Ovary (tissue), 10 donors: ENCODE measurements at regions of chr13 and their contacts with region 1.

Region 1: DNA sequence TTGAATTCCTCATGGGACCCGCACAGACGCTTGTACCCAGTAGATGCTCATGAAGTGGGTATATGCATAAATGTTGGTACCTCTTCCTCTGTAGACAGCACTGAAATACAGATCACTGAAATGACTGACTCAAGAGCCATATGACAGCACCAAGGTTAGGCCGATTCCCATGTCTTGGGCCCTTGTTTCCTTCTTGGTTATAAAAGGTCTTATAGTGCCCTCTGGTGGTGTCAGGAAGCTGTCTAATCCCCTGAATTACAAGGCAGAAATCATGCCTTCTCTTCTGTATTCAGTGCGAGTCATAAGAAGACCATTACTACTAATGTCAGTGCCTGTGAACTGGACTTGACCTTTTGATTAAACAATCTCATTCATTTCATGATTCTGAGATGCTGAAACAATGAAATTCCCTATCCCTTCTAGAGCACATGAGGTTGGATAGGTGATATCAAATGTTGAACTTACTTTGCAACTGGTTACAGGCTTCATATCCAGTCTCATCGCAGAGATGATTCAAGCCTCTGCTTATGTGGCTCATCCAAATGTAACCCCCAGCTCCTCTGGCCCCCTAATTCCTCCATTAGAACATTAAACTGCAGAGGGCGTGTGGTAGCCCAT is 59.7 kb downstream of the SPATA13 start:
- DNase-seq: peak in 1 of 5 donors; percentile 70
- H3K4me3 ChIP-seq: no peak overlapping the region
- H3K27ac ChIP-seq: peak overlapping the region in 1 of 2 donors; percentile 56
- H3K4me1 ChIP-seq: peaks cover 9% of the 10 kb centered on the region
- H3K27me3 ChIP-seq: no peaks in the 10 kb centered on the region
- CTCF ChIP-seq: peak; percentile 72 to 94 (median 89)
- EP300 ChIP-seq: no peak
- POLR2A ChIP-seq: no peak

Region 2: DNA sequence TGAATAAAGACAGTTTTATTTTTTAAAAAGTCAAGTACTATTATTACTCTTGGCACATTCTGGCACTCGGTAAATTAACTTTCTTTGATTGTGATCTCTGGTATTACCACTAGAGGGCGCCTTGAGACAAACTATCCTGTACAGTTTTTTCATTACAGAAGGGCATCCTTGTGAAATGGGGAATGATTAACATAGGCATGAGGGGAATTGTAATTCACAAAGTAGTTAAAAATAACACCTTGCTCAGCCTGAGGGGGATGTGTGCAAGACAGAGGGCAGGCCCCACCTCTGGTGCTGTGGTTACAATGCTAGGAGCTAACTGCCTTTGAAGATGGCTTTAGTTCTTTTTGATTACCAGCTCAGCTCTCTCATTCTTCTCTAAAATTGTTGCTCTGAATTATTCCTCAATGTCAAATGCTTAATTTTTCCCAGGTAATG is 298.7 kb before region 1 on chr13:
- intact Hi-C with region 1: loop called in 3 of 4 experiments (anchors 5 to 10 kb)
- DNase-seq: no peak
- H3K4me3 ChIP-seq: no peak overlapping the region
- H3K27ac ChIP-seq: no peak overlapping the region
- H3K4me1 ChIP-seq: no peaks in the 10 kb centered on the region
- H3K27me3 ChIP-seq: no peaks in the 10 kb centered on the region
- CTCF ChIP-seq: peak in 2 of 3 donors; percentile 16 to 21
- EP300 ChIP-seq: no peak
- POLR2A ChIP-seq: no peak

Region 3: DNA sequence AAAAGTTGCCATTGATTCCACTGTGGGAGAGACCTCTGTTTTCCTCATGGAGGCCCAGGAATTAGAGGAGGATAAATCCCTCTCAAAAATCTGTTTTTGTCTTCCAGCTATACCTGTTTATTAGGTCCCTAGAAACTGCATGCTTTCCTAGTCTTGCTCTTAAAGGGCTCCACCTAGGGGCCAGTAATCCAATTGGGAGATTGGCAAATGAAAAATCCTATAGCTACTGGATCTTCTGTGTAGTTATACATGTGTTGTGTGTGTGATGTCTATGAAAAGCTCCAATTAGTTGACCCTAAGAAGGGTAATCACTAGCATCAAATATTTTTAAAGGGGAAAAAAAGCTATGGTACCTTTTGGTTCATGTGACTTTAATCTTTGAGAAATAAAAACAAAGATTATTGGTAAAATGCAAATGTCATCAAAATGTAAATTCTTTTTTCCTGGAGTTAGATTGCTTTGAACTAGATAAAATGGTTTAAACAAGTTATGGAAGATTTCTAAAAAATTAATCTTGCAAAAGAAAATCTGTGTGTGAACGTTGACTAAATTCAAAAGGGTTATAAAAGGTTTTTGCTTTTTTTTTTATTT is 259.5 kb before region 1 on chr13:
- intact Hi-C with region 1: no loop called
- DNase-seq: no peak
- H3K4me3 ChIP-seq: no peak overlapping the region
- H3K27ac ChIP-seq: no peak overlapping the region
- H3K4me1 ChIP-seq: peaks cover 4% of the 10 kb centered on the region
- H3K27me3 ChIP-seq: no peaks in the 10 kb centered on the region
- CTCF ChIP-seq: peak; percentile 17 to 28 (median 26)
- EP300 ChIP-seq: no peak
- POLR2A ChIP-seq: no peak

Region 4: DNA sequence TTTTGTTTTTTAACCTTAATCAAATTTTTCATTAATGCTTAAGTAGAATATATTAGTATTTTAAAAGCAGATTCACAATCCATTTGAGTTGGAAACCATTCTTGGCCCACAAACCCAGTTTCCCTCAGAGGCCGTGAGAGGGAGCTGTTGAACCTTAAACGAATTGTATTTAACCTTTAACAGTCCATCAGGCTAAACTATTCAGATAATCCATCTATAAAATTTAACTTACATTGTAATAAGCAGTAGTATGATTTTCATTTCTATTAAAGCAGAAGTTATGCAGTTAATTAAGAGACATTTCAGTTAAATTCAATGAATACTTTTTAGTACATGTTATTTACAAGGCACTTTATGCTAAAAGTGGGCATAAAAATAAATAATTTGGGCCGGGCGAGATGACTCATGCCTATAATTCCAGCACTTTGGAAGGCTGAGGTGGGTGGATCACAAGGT is 199.8 kb before region 1 on chr13:
- intact Hi-C with region 1: loop called (anchors 5 kb)
- DNase-seq: peak; percentile 50 to 73 (median 65)
- H3K4me3 ChIP-seq: no peak overlapping the region
- H3K27ac ChIP-seq: no peak overlapping the region
- H3K4me1 ChIP-seq: no peaks in the 10 kb centered on the region
- H3K27me3 ChIP-seq: peaks cover 2% of the 10 kb centered on the region
- CTCF ChIP-seq: peak; percentile 27 to 92 (median 84)
- EP300 ChIP-seq: no peak
- POLR2A ChIP-seq: no peak

Region 5: DNA sequence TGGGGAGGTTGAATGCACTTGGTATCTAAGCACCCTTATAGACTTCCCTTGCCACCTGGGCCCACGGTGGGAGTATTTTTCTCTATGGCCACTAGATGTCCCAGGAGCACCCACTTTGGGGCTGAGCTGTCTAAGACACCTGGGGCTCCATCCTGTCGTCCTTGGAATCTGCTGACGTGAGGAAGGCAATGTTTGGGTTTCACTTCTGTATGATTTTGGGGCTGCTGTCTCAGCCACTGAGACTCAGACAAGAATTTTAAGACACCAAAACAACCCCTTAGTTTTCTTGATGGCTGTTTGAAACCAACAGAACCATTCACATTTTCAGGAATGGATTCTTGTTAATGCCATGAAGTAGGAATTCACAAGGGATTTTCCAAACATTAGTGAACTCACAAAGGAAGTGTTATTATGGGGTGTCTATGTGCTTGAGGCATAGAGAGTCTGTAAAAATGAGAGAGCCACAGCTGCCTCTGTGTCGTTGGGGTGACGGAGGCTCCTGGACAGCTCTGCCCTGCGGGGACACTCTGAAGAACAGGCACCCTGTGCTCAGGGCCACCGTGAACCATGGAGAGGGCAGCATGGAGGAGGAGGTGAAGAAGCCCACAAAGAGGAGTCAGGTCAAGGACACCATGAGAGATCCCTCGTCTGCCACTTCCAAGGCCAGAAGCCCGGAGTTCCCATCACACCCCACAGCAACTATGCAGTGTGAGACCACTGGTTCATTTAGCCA is 166.5 kb before region 1 on chr13:
- intact Hi-C with region 1: loop called in 3 of 4 experiments (anchors 5 to 10 kb)
- DNase-seq: peak; percentile 63 to 73 (median 72)
- H3K4me3 ChIP-seq: no peak overlapping the region
- H3K27ac ChIP-seq: peak overlapping the region; percentile 7 to 82
- H3K4me1 ChIP-seq: peaks cover 12% of the 10 kb centered on the region
- H3K27me3 ChIP-seq: no peaks in the 10 kb centered on the region
- CTCF ChIP-seq: peak; percentile 36 to 81 (median 77)
- EP300 ChIP-seq: no peak
- POLR2A ChIP-seq: no peak